Motor neuron (in vitro differentiated cells): ENCODE measurements at regions of chr22 and their contacts with region 1.

Region 1: GRCh38 chr22:25680956-25681355 is 61.0 kb upstream of the MYO18B start:
- ATAC-seq: peak in 2 of 8 experiments; percentile 68 to 75
- H3K4me3 ChIP-seq: no peak overlapping the region
- H3K27ac ChIP-seq: no peak overlapping the region
- H3K4me1 ChIP-seq: no peaks in the 10 kb centered on the region

Region 2: DNA sequence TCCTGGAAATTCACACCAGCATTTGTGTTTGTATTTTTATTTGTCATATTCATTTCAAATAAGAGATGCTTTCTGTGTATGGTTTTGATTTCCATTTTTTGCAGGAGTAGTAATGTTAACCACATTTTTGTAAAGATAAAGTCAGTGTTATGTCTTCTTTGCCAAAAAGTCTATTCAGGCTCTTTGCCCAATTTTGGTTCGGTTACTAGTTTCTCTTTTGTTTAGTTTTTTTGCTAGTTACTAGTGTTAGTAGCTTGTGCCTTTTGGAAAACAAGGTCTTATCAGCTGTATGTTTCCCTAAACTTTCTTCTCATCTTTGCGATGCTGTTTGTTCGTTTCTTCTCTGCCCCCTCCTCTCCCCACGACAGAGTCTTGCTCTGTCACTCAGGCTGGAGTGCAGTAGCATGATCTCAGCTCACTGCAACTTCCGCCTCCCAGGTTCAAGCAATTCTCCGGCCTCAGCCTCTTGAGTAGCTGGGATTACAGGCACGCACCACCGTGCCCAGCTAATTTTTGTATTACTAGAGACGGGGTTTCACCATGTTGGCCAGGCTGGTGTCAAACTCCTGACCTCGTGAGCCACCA is 228.7 kb before region 1 on chr22:
- in situ Hi-C with region 1: loop called in 1 of 9 experiments (anchors 25 kb)
- ATAC-seq: peak in 1 of 8 experiments; percentile 20
- H3K4me3 ChIP-seq: no peak overlapping the region
- H3K27ac ChIP-seq: no peak overlapping the region
- H3K4me1 ChIP-seq: peaks cover 14 to 18% of the 10 kb centered on the region in 2 donors

Region 3: DNA sequence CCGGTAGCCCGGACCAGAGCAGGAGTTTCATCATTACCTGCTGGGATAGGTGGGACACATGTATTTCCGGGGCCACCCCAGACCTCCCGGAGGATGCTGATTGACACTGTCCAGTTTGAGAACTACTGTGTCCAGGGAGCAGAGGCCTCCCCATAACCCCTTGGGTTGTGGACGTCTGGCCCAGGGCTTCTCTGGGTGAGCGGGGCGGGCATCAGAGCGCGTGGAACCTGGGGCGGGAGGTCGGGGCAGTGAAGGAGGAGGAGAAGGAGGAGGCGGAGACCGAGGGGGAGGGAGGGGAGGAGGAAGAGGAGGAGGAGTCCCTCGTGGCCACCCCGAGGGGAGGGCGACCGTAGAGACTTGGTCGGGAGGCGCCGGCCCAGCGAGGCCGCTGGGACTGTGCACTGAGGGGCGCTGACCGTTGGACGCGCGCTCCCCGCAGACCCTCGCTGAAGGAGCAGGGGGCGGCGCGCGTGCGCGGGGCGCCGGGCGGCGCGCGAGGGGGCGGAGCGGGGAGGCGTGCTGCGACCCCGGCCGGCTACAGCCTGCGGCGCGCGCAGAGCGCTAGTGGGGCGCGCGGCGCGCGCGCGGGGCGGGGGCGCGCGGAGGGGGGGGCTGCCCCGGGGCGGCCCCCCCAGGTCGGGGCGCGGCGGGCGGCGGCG is 116.5 kb before region 1 on chr22 and contains the start of gene GRK3:
- in situ Hi-C with region 1: loop called in 2 of 9 experiments (anchors 25 kb)
- ATAC-seq: peak; percentile 74 to 88 (median 84)
- H3K4me3 ChIP-seq: peak within 1 kb of the TSS; percentile 83 to 100 (median 90)
- H3K27ac ChIP-seq: peak within 1 kb of the TSS; percentile 59 to 65
- H3K4me1 ChIP-seq: peaks cover 15% of the 10 kb centered on the region in 2 donors
- total RNA-seq, gene GRK3: 7.0 to 24.2 (median 15.6) TPM